Ovary (tissue), 10 donors: ENCODE measurements at regions of chr17 and their contacts with region 1.

Region 1: DNA sequence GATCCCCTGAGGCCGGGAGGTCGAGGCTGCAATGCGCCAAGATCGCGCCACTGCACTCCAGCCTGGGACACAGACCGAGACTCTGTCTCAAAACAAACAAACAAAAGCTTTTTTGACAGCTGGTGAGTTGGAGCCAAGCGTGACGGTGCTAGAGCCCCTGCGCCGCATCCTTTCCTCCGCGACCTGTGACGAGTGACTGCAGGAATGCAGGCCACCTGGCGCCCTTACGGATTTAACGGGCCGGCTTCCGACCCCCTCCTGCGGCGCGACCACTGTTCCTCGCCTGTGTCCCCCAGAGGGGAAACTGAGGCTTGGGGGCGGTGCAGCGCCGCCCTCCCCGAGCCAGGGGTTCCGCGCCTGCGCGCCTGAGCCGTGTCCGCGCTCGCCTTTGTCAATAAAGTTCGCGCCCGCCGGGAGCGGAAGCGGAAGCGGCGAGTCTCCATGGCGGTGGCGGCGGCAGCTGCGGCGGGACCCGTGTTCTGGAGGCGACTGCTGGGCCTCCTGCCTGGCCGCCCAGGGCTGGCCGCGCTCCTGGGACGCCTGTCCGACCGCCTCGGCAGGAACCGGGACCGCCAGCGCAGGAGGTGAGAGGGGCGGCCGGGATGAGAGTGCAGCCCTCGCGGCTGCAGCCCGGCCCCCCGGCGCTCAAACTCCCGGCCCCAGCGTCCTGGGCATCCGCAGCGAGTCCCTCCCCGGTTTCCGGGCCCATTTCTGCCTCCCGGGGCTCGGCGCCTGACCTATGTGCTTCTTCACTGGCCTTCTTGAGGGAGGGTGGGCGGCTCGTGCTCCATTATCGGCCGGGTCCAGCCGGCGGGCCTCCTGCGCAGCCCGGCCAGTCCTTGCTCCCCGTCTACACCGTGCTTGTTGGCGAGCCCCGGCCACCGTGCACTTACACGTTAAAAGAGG is at the start of gene PGS1:
- DNase-seq: peak; percentile 70 to 87 (median 82)
- H3K4me3 ChIP-seq: peak within 1 kb of the TSS; percentile 95
- H3K27ac ChIP-seq: peak within 1 kb of the TSS; percentile 42 to 47
- H3K4me1 ChIP-seq: peaks cover 1% of the 10 kb centered on the region
- H3K27me3 ChIP-seq: no peaks in the 10 kb centered on the region
- CTCF ChIP-seq: peak in 1 of 3 donors; percentile 24
- EP300 ChIP-seq: no peak
- POLR2A ChIP-seq: peak; percentile 69
- total RNA-seq, gene PGS1: 27.2 to 50.2 (median 37.6) TPM

Region 2: GRCh38 chr17:78128551-78129350 is 249.7 kb before region 1 on chr17 and contains the start of gene TMC6:
- intact Hi-C with region 1: loop called in 1 of 4 experiments (anchors 10 kb)
- DNase-seq: peak in 1 of 5 donors; percentile 29
- H3K4me3 ChIP-seq: peak within 1 kb of the TSS; percentile 46
- H3K27ac ChIP-seq: no peak within 1 kb of the TSS
- H3K4me1 ChIP-seq: no peaks in the 10 kb centered on the region
- H3K27me3 ChIP-seq: no peaks in the 10 kb centered on the region
- CTCF ChIP-seq: no peak
- EP300 ChIP-seq: no peak
- POLR2A ChIP-seq: no peak
- total RNA-seq, gene TMC6: 7.2 to 26.8 (median 17.4) TPM

Region 3: DNA sequence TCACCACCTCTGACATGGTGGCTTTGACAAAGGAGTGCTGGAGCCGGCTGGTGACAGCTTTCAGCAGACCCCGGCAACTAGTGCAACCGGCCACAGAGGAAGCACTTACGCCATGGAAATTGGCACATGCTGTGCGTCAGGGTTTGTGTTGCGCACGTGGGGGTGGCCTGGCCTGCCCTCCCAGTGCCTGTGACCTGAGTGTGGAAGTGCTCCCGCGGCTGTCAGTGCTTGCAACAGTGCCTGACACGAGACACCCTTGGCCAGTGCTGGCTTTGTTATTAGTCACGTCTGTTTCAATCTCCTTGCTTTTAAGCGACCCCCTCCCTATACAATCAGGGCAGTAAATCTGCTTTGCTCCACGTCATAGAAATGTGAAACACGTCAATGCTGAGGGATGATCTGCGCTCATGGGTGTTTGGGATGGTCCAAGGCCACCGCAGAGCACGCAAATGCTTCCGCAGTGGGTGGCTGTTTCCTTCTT is 64.2 kb after region 1 on chr17:
- intact Hi-C with region 1: no loop called
- DNase-seq: peak in 1 of 5 donors; percentile 41
- H3K4me3 ChIP-seq: no peak overlapping the region
- H3K27ac ChIP-seq: no peak overlapping the region
- H3K4me1 ChIP-seq: no peaks in the 10 kb centered on the region
- H3K27me3 ChIP-seq: no peaks in the 10 kb centered on the region
- CTCF ChIP-seq: no peak
- EP300 ChIP-seq: no peak
- POLR2A ChIP-seq: no peak